Head of caudate nucleus (tissue), 42 donors: ENCODE measurements at regions of chr14 and their contacts with region 1.

Region 1: GRCh38 chr14:104768437-104769323 is 15.7 kb downstream of the SIVA1 start:
- DNase-seq: peak; percentile 73 to 98 (median 94)

Region 2: GRCh38 chr14:104826189-104826860 is 57.6 kb after region 1 on chr14:
- intact Hi-C with region 1: loop called (anchors 5 kb)
- DNase-seq: peak; percentile 70 to 98 (median 94)

Region 3: GRCh38 chr14:104913435-104913834 is 144.8 kb after region 1 on chr14:
- intact Hi-C with region 1: no loop called
- DNase-seq: no peak